ENCODE measurements at regions of chr10 and their contacts with region 1.

Region 1: DNA sequence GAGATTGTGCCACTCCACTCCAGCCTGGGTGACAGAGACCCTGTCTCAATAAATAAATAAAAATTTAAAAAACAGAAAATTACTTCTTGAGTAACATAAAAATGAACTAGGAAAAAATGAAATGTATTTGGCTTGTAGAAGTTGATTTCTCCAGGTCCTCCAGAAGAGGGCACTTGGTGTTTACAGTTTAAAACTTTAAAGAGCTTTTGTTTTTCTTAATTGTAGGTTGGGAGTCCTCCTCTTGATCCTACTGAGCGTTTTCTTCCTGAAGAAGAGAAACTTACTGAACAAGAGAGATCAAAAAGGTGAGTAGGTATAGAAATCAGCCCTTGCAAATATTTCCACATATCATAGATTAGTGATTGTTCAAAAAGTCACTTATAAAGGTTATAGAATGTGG is 16.2 kb downstream of the KIFBP start:
- DNase-seq: no peak
- ATAC-seq: peak in 4 of 8 donors; percentile 45 to 68 (median 65)
- H3K4me3 ChIP-seq: no peak overlapping the region
- H3K27ac ChIP-seq: peak overlapping the region in 3 of 10 donors; percentile 17 to 57 (median 32)
- H3K4me1 ChIP-seq: peaks cover 0 to 8% (median 0%) of the 10 kb centered on the region in 9 donors
- H3K27me3 ChIP-seq: no peaks in the 10 kb centered on the region
- CTCF ChIP-seq: peak in 8 of 9 donors; percentile 34 to 72 (median 61)

Region 2: GRCh38 chr10:69051303-69051702 is 46.5 kb after region 1 on chr10:
- intact Hi-C with region 1: loop called in 2 of 10 experiments (anchors 5 kb)
- DNase-seq: no peak
- ATAC-seq: peak in 7 of 8 donors; percentile 36 to 62 (median 40)
- H3K4me3 ChIP-seq: no peak overlapping the region
- H3K27ac ChIP-seq: peak overlapping the region in 6 of 10 donors; percentile 41 to 94 (median 78)
- H3K4me1 ChIP-seq: peaks cover 0 to 93% (median 12%) of the 10 kb centered on the region in 9 donors
- H3K27me3 ChIP-seq: no peaks in the 10 kb centered on the region
- CTCF ChIP-seq: no peak

Measured in heart right ventricle (tissue), 16 donors.